Testis (tissue), 5 donors: ENCODE measurements at regions of chr7 and their contacts with region 1.

Region 1: DNA sequence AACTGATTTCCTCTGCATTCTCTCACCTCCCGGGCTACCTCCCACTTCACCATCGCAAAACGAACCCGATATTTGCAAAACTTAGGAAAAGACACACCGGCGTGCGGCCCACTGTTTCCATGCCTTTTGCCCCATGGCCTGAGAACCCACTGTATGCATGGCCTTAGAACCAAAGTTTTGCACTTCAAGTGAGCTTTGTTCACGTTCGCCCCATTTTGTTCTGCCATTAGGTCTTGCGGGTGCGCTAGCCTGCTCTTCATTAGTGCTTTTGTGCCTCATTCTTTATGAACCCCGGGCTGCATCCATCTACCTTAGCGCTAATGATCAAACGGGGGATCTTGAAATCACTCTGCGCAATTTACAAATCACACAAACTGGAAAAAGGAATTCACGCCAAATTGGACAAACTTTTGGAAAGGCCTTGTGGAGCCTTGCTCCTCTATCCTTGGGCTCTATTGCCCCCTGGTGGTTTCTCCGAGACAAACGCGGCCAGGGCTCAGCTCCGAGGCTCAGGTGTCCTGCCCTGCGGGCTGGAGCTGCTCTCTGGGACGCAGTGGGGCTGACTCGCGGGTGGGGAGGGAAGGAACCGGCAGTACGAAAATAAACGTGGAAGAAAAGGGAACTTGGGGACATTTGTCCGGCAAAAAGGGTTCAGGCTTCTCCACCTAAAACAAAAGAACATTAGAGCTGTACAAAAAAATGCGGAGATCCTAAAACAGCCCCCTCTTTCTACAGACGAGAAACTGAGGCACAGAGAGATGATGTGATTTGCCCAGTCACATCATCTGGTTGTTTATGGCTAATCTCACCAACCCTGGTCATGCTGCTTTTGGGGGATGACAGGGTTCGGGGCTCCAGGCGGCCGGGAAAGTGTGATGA is 300.4 kb upstream of the NFE2L3 start:
- DNase-seq: peak; percentile 93
- H3K4me3 ChIP-seq: peak overlapping the region; percentile 13 to 40
- H3K27ac ChIP-seq: peak overlapping the region; percentile 78 to 84
- H3K4me1 ChIP-seq: peaks cover 61% of the 10 kb centered on the region
- H3K27me3 ChIP-seq: no peaks in the 10 kb centered on the region
- CTCF ChIP-seq: peak; percentile 84 to 94 (median 94)
- POLR2A ChIP-seq: no peak

Region 2: DNA sequence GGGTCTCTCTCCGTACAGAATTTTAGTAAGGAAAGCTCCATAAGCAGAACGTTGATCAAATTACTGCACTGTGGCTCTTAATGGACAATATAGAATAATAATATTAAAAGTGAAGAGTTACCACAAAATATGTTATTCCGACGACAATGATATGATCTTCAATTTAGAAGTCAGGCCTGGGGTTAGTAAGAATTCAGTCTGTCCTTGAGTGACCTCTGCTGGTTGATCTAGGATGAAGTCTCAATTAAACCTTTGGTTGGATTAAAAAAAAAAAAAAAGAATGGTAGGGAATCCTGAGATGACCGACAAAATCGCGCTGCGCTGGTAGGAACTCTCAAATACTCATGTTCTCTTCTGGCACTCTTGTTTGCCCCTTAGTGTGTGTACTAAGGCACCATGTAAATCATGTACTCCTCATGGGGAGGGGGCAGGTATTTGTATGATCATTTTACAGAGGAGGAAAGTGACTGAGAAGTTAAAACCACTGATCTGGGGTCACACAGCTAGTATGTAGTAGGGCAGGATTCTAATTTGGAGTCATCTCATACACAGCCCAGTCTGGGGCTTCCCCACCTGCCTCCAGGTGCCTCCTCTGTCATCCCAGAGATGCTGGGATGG is 462.0 kb before region 1 on chr7:
- intact Hi-C with region 1: loop called (anchors 5 kb)
- DNase-seq: peak; percentile 22
- H3K4me3 ChIP-seq: no peak overlapping the region
- H3K27ac ChIP-seq: no peak overlapping the region
- H3K4me1 ChIP-seq: peaks cover 14% of the 10 kb centered on the region
- H3K27me3 ChIP-seq: no peaks in the 10 kb centered on the region
- CTCF ChIP-seq: peak; percentile 38 to 52 (median 39)
- POLR2A ChIP-seq: no peak

Region 3: GRCh38 chr7:25565949-25566348 is 285.6 kb before region 1 on chr7:
- intact Hi-C with region 1: loop called (anchors 5 kb)
- DNase-seq: peak; percentile 81
- H3K4me3 ChIP-seq: no peak overlapping the region
- H3K27ac ChIP-seq: peak overlapping the region in 1 of 2 donors; percentile 32
- H3K4me1 ChIP-seq: no peaks in the 10 kb centered on the region
- H3K27me3 ChIP-seq: no peaks in the 10 kb centered on the region
- CTCF ChIP-seq: peak; percentile 100
- POLR2A ChIP-seq: no peak

Region 4: GRCh38 chr7:25777969-25778708 is 73.4 kb before region 1 on chr7:
- intact Hi-C with region 1: loop called (anchors 10 kb)
- DNase-seq: peak; percentile 43
- H3K4me3 ChIP-seq: no peak overlapping the region
- H3K27ac ChIP-seq: peak overlapping the region in 1 of 2 donors; percentile 6
- H3K4me1 ChIP-seq: peaks cover 7% of the 10 kb centered on the region
- H3K27me3 ChIP-seq: no peaks in the 10 kb centered on the region
- CTCF ChIP-seq: no peak
- POLR2A ChIP-seq: no peak

Region 5: DNA sequence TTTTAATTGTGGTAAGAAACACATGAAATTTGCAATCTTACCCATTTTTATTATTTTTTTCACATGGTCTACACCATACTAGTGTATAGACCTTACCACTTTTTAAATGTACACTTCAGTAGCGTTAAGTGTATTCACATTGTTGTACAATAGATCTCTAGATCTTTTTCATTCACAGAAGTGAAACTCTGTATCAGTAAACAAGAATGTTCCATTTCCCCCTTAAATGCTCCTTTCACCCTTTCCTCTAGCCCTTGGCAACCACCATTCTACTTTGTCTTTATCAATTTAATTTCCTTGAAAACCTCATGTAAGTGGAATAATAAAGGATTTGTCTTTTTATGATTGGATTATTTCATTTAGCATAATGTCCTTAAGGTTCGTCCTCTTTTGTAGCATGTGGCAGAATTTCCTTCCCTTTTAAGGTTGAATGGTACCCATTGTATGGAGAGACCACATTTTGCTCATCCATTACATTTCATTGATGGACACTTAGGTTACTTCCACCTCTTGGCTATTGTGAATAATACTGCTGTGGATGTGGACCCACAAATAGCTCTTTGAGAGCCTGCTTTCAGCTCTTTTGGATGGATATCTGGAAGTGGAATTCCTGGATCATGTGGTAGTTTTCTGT is 485.8 kb after region 1 on chr7:
- intact Hi-C with region 1: no loop called
- DNase-seq: no peak
- H3K4me3 ChIP-seq: no peak overlapping the region
- H3K27ac ChIP-seq: no peak overlapping the region
- H3K4me1 ChIP-seq: no peaks in the 10 kb centered on the region
- H3K27me3 ChIP-seq: no peaks in the 10 kb centered on the region
- CTCF ChIP-seq: no peak
- POLR2A ChIP-seq: no peak